HepG2 (cell line): ENCODE measurements at regions of chr20 and their contacts with region 1.

Region 1: DNA sequence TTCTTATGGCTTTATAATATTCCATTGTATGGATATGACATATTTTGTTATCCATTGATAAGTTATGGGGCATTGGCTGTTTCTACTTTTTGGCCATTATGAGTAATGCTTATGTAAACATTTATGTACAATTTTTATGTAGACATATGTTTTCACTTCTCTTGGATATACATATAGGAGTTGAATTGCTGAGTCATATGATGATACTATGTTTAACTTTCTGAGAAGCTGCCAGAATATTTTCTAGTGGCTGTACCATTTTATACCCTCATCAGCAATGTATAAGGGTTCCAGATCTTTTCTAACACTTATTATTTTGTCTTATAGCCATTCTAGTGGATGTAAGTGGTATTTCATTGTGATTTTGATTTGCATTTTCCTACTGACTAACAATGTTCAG is 23.1 kb downstream of the OTOR start:
- DNase-seq: no peak
- ATAC-seq: no peak
- H3K4me3 ChIP-seq: no peak overlapping the region
- H3K27ac ChIP-seq: no peak overlapping the region
- H3K4me1 ChIP-seq: no peaks in the 10 kb centered on the region
- H3K27me3 ChIP-seq: no peaks in the 10 kb centered on the region
- CTCF ChIP-seq: no peak
- EP300 ChIP-seq: no peak
- POLR2A ChIP-seq: no peak
- RAD21 ChIP-seq: no peak

Region 2: GRCh38 chr20:16749573-16749972 is 21.6 kb before region 1 on chr20:
- CTCF ChIA-PET with region 1: no interaction called
- POLR2A ChIA-PET with region 1: no interaction called
- in situ Hi-C with region 1: no loop called
- intact Hi-C with region 1: loop called (anchors 1 kb)
- DNase-seq: peak; percentile 23
- ATAC-seq: peak; percentile 67
- H3K4me3 ChIP-seq: no peak overlapping the region
- H3K27ac ChIP-seq: no peak overlapping the region
- H3K4me1 ChIP-seq: peaks cover 7% of the 10 kb centered on the region; the same call in 1 of the 2 replicates
- H3K27me3 ChIP-seq: no peaks in the 10 kb centered on the region
- CTCF ChIP-seq: peak; percentile 46
- EP300 ChIP-seq: no peak
- POLR2A ChIP-seq: no peak
- RAD21 ChIP-seq: no peak

Region 3: DNA sequence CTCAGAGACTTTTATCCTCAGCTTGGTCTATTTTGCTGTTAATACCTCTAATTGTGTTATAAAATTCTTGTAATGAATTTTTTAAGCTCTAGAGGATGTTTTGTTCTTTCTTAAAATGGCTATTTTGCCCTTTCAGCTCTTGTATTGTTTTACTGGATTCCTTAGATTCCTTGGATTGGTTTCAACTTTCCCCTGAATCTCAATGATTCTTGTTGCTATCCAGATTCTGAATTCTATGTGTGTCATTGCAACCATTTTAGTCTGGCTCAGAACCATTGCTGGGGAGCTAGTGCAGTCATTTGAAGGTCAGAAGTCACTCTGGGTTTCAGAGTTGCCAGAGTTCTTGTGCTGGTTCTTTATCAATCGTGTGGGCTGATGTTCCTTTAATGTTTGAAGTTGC is 14.0 kb after region 1 on chr20:
- CTCF ChIA-PET with region 1: no interaction called
- POLR2A ChIA-PET with region 1: no interaction called
- in situ Hi-C with region 1: no loop called
- intact Hi-C with region 1: no loop called
- DNase-seq: no peak
- ATAC-seq: no peak
- H3K4me3 ChIP-seq: no peak overlapping the region
- H3K27ac ChIP-seq: no peak overlapping the region
- H3K4me1 ChIP-seq: no peaks in the 10 kb centered on the region
- H3K27me3 ChIP-seq: no peaks in the 10 kb centered on the region; a peak in 1 of 5 replicates
- CTCF ChIP-seq: no peak
- EP300 ChIP-seq: no peak
- POLR2A ChIP-seq: no peak
- RAD21 ChIP-seq: no peak

Region 4: GRCh38 chr20:17109307-17109706 is 338.1 kb after region 1 on chr20:
- CTCF ChIA-PET with region 1: no interaction called
- POLR2A ChIA-PET with region 1: no interaction called
- in situ Hi-C with region 1: no loop called
- intact Hi-C with region 1: no loop called
- DNase-seq: no peak
- ATAC-seq: no peak
- H3K4me3 ChIP-seq: no peak overlapping the region
- H3K27ac ChIP-seq: no peak overlapping the region
- H3K4me1 ChIP-seq: no peaks in the 10 kb centered on the region
- H3K27me3 ChIP-seq: no peaks in the 10 kb centered on the region
- CTCF ChIP-seq: no peak
- EP300 ChIP-seq: no peak
- POLR2A ChIP-seq: no peak
- RAD21 ChIP-seq: no peak